Mucosa of descending colon (tissue), 3 donors: ENCODE measurements at regions of chr15 and their contacts with region 1.

Region 1: GRCh38 chr15:38817427-38818156 is 253.0 kb upstream of the RASGRP1 start:
- DNase-seq: peak; percentile 79 to 96 (median 94)
- ATAC-seq: peak; percentile 99
- H3K4me3 ChIP-seq: no peak overlapping the region
- H3K4me1 ChIP-seq: no peaks in the 10 kb centered on the region
- CTCF ChIP-seq: peak; percentile 99

Region 2: GRCh38 chr15:38991126-38991525 is 173.5 kb after region 1 on chr15:
- intact Hi-C with region 1: loop called in 1 of 2 experiments (anchors 5 kb)
- DNase-seq: peak in 1 of 3 donors; percentile 10
- ATAC-seq: peak; percentile 39
- H3K4me3 ChIP-seq: no peak overlapping the region
- H3K4me1 ChIP-seq: no peaks in the 10 kb centered on the region
- CTCF ChIP-seq: no peak